ENCODE measurements at regions of chr14 and their contacts with region 1.

Region 1: GRCh38 chr14:64636208-64636979 is 67.8 kb upstream of the PLEKHG3 start:
- DNase-seq: peak; percentile 77
- ATAC-seq: peak; percentile 94

Region 2: DNA sequence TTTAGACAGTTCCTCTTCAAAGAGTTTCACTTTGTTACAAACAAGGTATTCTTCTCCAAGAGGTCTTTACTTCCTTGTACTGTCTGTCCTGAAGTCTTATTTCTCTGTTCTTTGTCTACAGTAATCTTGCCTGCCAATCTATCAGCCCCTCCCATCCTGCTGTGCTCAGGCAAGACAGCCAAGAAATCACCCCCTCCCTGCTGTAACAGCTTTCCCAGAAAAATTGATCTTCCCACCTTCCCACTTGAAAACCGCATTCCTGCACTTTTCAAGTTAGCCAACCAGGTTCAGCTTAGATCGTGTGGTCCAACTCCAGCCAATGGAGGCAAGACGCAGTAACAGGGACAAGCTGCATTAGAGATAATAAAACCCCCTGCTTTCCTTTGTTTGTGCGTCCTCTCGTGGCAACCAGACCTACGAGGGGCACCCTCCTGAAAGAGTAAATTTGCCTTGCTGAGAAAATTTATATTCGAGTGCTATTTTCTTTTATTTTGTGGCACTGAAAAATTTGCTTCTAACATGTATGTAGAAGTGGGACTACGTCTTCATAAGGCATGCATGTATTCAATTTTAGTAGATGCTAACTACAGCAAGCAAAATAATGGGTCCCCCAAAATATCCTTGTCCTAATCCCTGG is 295.7 kb before region 1 on chr14:
- intact Hi-C with region 1: loop called (anchors 10 kb)
- DNase-seq: no peak
- ATAC-seq: no peak

Region 3: DNA sequence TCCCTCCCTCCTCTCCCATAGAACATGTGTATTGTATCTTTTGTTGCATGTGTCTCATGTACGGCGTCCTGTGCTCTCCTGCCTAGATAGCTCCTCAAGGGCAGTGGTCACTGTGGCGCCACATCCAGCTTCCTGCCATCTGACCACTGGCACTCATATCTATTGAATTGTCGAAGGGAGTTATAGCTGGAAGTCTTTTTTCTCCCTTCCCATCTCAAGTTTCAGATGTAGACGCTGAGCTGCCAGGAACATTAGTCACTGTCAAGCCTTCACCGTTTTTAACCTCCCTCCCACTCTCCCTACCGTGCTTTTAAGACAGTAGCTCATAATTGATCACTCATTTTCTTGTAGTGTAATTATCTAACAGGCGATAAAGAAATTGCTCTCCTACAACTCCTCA is 215.2 kb before region 1 on chr14:
- intact Hi-C with region 1: loop called (anchors 10 kb)
- DNase-seq: no peak
- ATAC-seq: no peak

Region 4: GRCh38 chr14:64541972-64542838 is 94.2 kb before region 1 on chr14:
- intact Hi-C with region 1: loop called (anchors 2 kb)
- DNase-seq: no peak
- ATAC-seq: no peak

Measured in Right ventricle myocardium superior (tissue), 1 donor.